ENCODE measurements at regions of chr1 and their contacts with region 1.

Region 1: GRCh38 chr1:225428068-225428880 is 436 bp upstream of the LBR start:
- DNase-seq: peak; percentile 95
- ATAC-seq: peak; percentile 92
- H3K4me3 Mint-ChIP-seq: peak overlapping the region; percentile 86
- H3K27ac Mint-ChIP-seq: peak overlapping the region; percentile 96
- H3K4me1 Mint-ChIP-seq: peaks cover 45% of the 10 kb centered on the region
- H3K27me3 Mint-ChIP-seq: no peaks in the 10 kb centered on the region

Region 2: GRCh38 chr1:223700942-223701637 is 1727.2 kb before region 1 on chr1:
- CTCF ChIA-PET with region 1: no interaction called
- POLR2A ChIA-PET with region 1: no interaction called
- intact Hi-C with region 1: loop called in 1 of 2 experiments (anchors 5 kb)
- DNase-seq: peak; percentile 59
- ATAC-seq: peak; percentile 75
- H3K4me3 Mint-ChIP-seq: no peak overlapping the region
- H3K27ac Mint-ChIP-seq: peak overlapping the region; percentile 55
- H3K4me1 Mint-ChIP-seq: peaks cover 34% of the 10 kb centered on the region
- H3K27me3 Mint-ChIP-seq: peaks cover 4% of the 10 kb centered on the region

Region 3: DNA sequence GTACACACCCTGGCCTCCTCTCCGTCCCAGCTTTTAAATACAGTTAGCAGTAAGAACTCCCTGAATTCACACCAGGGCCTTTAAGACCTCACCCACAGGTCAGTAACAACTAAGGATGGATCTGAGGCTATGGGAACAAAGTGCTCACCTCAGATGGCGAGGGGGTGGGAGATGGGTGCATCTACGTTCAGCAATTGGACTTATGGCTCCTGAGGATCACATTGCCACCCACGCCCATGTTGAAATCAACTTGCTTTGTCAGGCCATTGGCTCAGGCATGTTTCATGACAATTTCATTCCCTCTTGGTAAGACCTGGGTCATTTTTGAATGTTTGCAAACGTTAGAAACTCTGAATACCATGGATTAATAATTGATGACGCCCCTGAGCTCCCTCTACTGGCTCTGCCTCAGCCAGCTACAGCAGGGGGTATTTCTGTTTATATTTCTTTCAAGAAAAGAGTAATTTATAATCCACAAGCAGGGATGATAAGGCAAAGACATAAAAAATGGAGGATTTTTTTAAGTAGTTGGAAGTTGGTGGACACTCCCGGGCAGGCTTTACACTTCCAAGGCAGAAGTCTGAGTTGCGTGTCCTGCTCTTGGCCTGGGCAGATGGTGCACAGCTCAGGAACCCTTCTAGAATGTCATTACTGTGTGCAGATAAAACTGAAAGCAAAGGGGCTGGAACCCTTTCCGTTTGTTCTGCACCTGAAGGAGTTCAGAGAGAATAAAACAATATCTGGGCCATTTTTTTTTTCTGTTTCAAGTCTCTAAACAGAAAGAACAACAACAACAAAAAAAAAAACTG is 13.2 kb after region 1 on chr1:
- CTCF ChIA-PET with region 1: interaction called, 11 read pairs
- POLR2A ChIA-PET with region 1: interaction called, 17 read pairs
- intact Hi-C with region 1: loop called (anchors 1 kb)
- DNase-seq: no peak
- ATAC-seq: no peak
- H3K4me3 Mint-ChIP-seq: no peak overlapping the region
- H3K27ac Mint-ChIP-seq: peak overlapping the region; percentile 82
- H3K4me1 Mint-ChIP-seq: peaks cover 49% of the 10 kb centered on the region
- H3K27me3 Mint-ChIP-seq: no peaks in the 10 kb centered on the region

Region 4: GRCh38 chr1:225447650-225448089 is 19.4 kb after region 1 on chr1:
- CTCF ChIA-PET with region 1: interaction called, 11 read pairs
- POLR2A ChIA-PET with region 1: interaction called, 17 read pairs
- intact Hi-C with region 1: loop called (anchors 1 kb)
- DNase-seq: peak; percentile 1
- ATAC-seq: no peak
- H3K4me3 Mint-ChIP-seq: no peak overlapping the region
- H3K27ac Mint-ChIP-seq: peak overlapping the region; percentile 21
- H3K4me1 Mint-ChIP-seq: peaks cover 55% of the 10 kb centered on the region
- H3K27me3 Mint-ChIP-seq: no peaks in the 10 kb centered on the region

Region 5: GRCh38 chr1:225467193-225468020 is 39.1 kb after region 1 on chr1:
- CTCF ChIA-PET with region 1: interaction called, 5 read pairs
- POLR2A ChIA-PET with region 1: interaction called, 7 read pairs
- intact Hi-C with region 1: loop called (anchors 1 kb)
- DNase-seq: peak; percentile 90
- ATAC-seq: peak; percentile 90
- H3K4me3 Mint-ChIP-seq: peak overlapping the region; percentile 85
- H3K27ac Mint-ChIP-seq: peak overlapping the region; percentile 98
- H3K4me1 Mint-ChIP-seq: peaks cover 25% of the 10 kb centered on the region
- H3K27me3 Mint-ChIP-seq: no peaks in the 10 kb centered on the region

Region 6: DNA sequence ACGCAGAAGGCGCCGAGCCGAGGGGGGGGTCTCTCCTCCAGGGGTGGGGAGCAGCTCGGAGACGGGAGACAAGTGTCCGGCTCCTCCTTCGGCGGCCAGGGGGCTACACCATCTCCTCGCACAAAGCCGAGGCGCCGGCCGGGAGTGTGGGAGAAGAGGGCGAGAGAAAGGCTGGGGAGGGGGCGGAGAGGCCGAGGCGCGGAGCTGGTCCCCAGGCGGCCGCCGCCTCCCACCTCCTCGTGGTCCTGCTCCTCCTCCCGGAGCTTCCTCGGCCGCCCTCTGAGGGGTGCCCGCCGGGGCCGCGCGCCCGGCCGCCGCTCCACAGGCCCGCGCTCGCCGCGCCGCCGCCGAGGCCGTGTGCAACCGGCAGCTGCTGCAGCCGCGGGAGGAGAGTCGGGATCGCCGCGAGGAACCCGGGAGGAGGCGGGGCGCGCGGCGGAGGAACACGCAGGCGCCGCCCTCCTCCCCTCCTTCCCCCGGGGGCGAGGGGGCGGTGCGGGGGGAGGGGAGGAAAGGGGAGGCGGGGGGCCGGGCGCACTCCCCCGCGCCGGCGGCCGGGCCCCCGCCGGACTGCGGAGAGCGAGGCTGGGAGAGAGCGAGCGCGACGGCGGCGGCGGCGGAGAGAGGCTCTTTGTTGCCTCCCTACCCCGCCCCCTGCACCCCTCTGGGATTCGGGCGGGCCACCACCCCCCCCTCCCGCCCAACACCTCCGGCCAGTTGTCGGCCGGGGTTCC is 224.6 kb after region 1 on chr1 and contains the start of gene ENAH:
- CTCF ChIA-PET with region 1: no interaction called
- POLR2A ChIA-PET with region 1: no interaction called
- intact Hi-C with region 1: loop called in 1 of 2 experiments (anchors 1 kb)
- DNase-seq: peak; percentile 65
- ATAC-seq: peak; percentile 69
- H3K4me3 Mint-ChIP-seq: peak within 1 kb of the TSS; percentile 75
- H3K27ac Mint-ChIP-seq: peak within 1 kb of the TSS; percentile 15
- H3K4me1 Mint-ChIP-seq: peaks cover 12% of the 10 kb centered on the region
- H3K27me3 Mint-ChIP-seq: peaks cover 31% of the 10 kb centered on the region
- total RNA-seq, gene ENAH: 0.62 to 0.81 TPM

Region 7: GRCh38 chr1:225923692-225924555 is 495.6 kb after region 1 on chr1 and contains the start of gene PYCR2:
- CTCF ChIA-PET with region 1: no interaction called
- POLR2A ChIA-PET with region 1: no interaction called
- intact Hi-C with region 1: loop called in 1 of 2 experiments (anchors 1 kb)
- DNase-seq: peak; percentile 97
- ATAC-seq: peak; percentile 97
- H3K4me3 Mint-ChIP-seq: peak within 1 kb of the TSS; percentile 93
- H3K27ac Mint-ChIP-seq: peak within 1 kb of the TSS; percentile 96
- H3K4me1 Mint-ChIP-seq: peaks cover 54% of the 10 kb centered on the region
- H3K27me3 Mint-ChIP-seq: no peaks in the 10 kb centered on the region
- total RNA-seq, gene PYCR2: 106 to 126 TPM